HCT116 (cell line): ENCODE measurements at regions of chr11 and their contacts with region 1.

Region 1: GRCh38 chr11:64100360-64100759 is 64.6 kb downstream of the FLRT1 start:
- DNase-seq: no peak
- ATAC-seq: peak; percentile 83
- H3K4me3 ChIP-seq: no peak overlapping the region
- H3K27ac ChIP-seq: no peak overlapping the region
- H3K4me1 ChIP-seq: peaks cover 0 to 3% of the 10 kb centered on the region in 2 experiments; a peak in 2 of 4 replicates
- H3K27me3 ChIP-seq: no peaks in the 10 kb centered on the region
- CTCF ChIP-seq: peak in 2 of 3 experiments; percentile 49 to 52; a peak in 3 of 6 replicates
- POLR2A ChIP-seq: no peak
- RAD21 ChIP-seq: no peak

Region 2: GRCh38 chr11:64058494-64058893 is 41.9 kb before region 1 on chr11:
- CTCF ChIA-PET with region 1: no interaction called
- POLR2A ChIA-PET with region 1: no interaction called
- RAD21 ChIA-PET with region 1: no interaction called
- intact Hi-C with region 1: loop called (anchors 10 kb)
- DNase-seq: no peak
- ATAC-seq: no peak
- H3K4me3 ChIP-seq: no peak overlapping the region
- H3K27ac ChIP-seq: no peak overlapping the region
- H3K4me1 ChIP-seq: no peaks in the 10 kb centered on the region
- H3K27me3 ChIP-seq: no peaks in the 10 kb centered on the region
- CTCF ChIP-seq: no peak
- POLR2A ChIP-seq: no peak
- RAD21 ChIP-seq: no peak